Naive thymus-derived CD4-positive, alpha-beta T cell (primary cell): ENCODE measurements at regions of chr9 and their contacts with region 1.

Region 1: GRCh38 chr9:114894801-114895433 is 35.5 kb downstream of the TNFSF8 start:
- DNase-seq: no peak
- ATAC-seq: peak; percentile 27
- H3K4me3 ChIP-seq: no peak overlapping the region
- H3K4me3 Mint-ChIP-seq: peak overlapping the region in 7 of 10 donors; percentile 11 to 73 (median 34)
- H3K27ac ChIP-seq: no peak overlapping the region
- H3K27ac Mint-ChIP-seq: peak overlapping the region in 7 of 9 donors; percentile 24 to 87 (median 48)
- H3K4me1 ChIP-seq: peaks cover 56 to 73% of the 10 kb centered on the region in 2 donors
- H3K4me1 Mint-ChIP-seq: peaks cover 17 to 54% (median 32%) of the 10 kb centered on the region in 7 donors
- H3K27me3 ChIP-seq: no peaks in the 10 kb centered on the region
- H3K27me3 Mint-ChIP-seq: no peaks in the 10 kb centered on the region

Region 2: DNA sequence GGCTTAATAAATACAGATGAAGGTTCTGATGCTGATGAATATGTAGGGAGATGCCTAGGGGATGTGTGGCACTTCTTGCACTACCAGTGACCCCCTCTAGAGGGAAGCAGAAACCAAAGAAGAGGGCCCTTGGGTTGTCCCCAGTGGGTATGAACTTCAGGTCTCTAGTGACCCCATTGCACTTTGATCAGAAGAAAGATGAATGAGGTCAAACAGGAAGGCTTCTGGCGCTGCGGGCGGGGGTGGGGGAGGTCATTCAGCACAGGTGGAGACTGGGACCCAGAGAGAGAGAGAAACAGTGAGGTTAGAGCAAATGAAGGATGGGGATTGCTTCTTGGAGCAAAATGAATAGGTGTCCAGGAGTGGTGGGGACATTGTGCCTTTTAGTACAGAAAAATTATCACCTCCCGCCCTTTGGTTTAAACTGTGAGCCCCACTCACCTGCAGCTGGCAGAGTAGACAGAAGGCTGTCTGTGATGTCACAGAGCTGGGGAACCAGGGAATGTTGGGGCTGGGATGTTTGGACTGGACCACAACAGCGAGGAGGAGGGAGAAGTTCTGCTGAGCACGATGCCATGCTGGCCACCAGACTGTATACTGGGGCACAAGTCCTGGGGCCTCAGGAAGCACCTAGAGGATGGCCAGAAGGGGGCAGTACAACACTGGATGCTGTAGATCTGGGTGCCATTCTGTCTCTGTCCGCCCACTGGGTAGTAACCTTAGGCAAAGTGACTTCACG is 213.2 kb before region 1 on chr9 and contains the start of gene TEX48:
- CTCF ChIA-PET with region 1: no interaction called
- POLR2A ChIA-PET with region 1: no interaction called
- intact Hi-C with region 1: loop called in 1 of 2 experiments (anchors 2 kb)
- DNase-seq: peak; percentile 29 to 74 (median 62)
- ATAC-seq: peak; percentile 95
- H3K4me3 ChIP-seq: no peak within 1 kb of the TSS
- H3K4me3 Mint-ChIP-seq: peak within 1 kb of the TSS in 1 of 10 donors; percentile 56
- H3K27ac ChIP-seq: no peak within 1 kb of the TSS
- H3K27ac Mint-ChIP-seq: peak within 1 kb of the TSS in 1 of 9 donors; percentile 95
- H3K4me1 ChIP-seq: peaks cover 5 to 11% of the 10 kb centered on the region in 2 donors
- H3K4me1 Mint-ChIP-seq: peaks cover 0 to 58% (median 7%) of the 10 kb centered on the region in 7 donors
- H3K27me3 ChIP-seq: peaks cover 0 to 4% of the 10 kb centered on the region in 2 donors
- H3K27me3 Mint-ChIP-seq: peaks cover 0 to 20% (median 14%) of the 10 kb centered on the region in 5 donors
- total RNA-seq, gene TEX48: 0.85 TPM in 1 of 5 experiments, not detected in the others

Region 3: GRCh38 chr9:114718801-114719221 is 176.1 kb before region 1 on chr9:
- CTCF ChIA-PET with region 1: no interaction called
- POLR2A ChIA-PET with region 1: no interaction called
- intact Hi-C with region 1: loop called in 1 of 2 experiments (anchors 1 kb)
- DNase-seq: peak in 5 of 9 donors; percentile 8 to 91 (median 18)
- ATAC-seq: peak; percentile 76
- H3K4me3 ChIP-seq: no peak overlapping the region
- H3K4me3 Mint-ChIP-seq: peak overlapping the region in 9 of 10 donors; percentile 0 to 75 (median 19)
- H3K27ac ChIP-seq: no peak overlapping the region
- H3K27ac Mint-ChIP-seq: peak overlapping the region in 6 of 9 donors; percentile 12 to 97 (median 64)
- H3K4me1 ChIP-seq: peaks cover 14 to 34% of the 10 kb centered on the region in 2 donors
- H3K4me1 Mint-ChIP-seq: peaks cover 10 to 88% (median 20%) of the 10 kb centered on the region in 7 donors
- H3K27me3 ChIP-seq: no peaks in the 10 kb centered on the region
- H3K27me3 Mint-ChIP-seq: no peaks in the 10 kb centered on the region

Region 4: DNA sequence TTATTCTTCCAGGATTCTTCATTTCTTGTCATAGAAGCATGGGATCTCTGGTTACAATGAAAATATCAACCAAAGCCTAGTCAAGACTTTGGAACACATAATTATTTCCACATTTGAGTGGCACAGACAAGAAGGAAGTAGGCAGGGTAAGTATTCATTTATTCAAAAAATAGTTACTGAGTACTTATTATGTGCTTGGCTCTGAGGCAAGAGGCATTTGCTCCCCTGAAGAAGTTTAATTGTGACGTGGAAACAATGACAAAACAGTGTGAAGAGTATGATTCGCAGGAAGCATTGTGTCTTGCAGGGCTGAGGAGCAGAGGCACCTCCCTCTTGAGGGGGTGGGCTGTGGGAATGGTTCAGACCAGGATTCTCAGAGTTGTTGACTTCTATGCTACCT is 44.0 kb before region 1 on chr9:
- CTCF ChIA-PET with region 1: no interaction called
- POLR2A ChIA-PET with region 1: interaction called, 3 read pairs
- intact Hi-C with region 1: loop called in 1 of 2 experiments (anchors 2 kb)
- DNase-seq: no peak
- ATAC-seq: no peak
- H3K4me3 ChIP-seq: no peak overlapping the region
- H3K4me3 Mint-ChIP-seq: no peak overlapping the region
- H3K27ac ChIP-seq: no peak overlapping the region
- H3K27ac Mint-ChIP-seq: peak overlapping the region in 2 of 9 donors; percentile 0 to 33
- H3K4me1 ChIP-seq: no peaks in the 10 kb centered on the region
- H3K4me1 Mint-ChIP-seq: peaks cover 8 to 13% (median 10%) of the 10 kb centered on the region in 7 donors
- H3K27me3 ChIP-seq: no peaks in the 10 kb centered on the region
- H3K27me3 Mint-ChIP-seq: peaks cover 0 to 5% (median 0%) of the 10 kb centered on the region in 5 donors

Region 5: DNA sequence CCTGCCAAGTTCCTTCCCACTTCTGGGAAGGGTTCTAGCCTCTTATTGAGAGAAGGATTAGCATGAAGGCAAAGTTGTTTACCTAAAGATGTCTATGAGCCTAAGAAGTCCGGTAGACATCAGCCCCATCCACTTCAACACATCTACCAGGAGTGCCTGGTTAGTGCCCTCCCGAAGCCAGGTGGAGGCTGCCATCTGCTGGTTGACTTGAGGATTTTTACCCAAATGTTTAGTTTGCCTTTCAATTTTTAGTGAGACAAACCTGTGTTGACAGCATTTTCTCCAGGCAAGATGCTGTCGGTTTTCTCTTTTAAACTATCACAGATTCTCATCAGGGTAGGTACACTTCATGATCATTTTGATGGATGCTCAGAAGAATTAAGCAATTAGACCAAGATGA is 119.1 kb after region 1 on chr9:
- CTCF ChIA-PET with region 1: no interaction called
- POLR2A ChIA-PET with region 1: no interaction called
- intact Hi-C with region 1: loop called in 1 of 2 experiments (anchors 2 kb)
- DNase-seq: peak; percentile 57 to 84 (median 79)
- ATAC-seq: peak; percentile 88
- H3K4me3 ChIP-seq: no peak overlapping the region
- H3K4me3 Mint-ChIP-seq: peak overlapping the region in 1 of 10 donors; percentile 24
- H3K27ac ChIP-seq: no peak overlapping the region
- H3K27ac Mint-ChIP-seq: peak overlapping the region in 2 of 9 donors; percentile 12 to 79
- H3K4me1 ChIP-seq: peaks cover 0 to 4% of the 10 kb centered on the region in 2 donors
- H3K4me1 Mint-ChIP-seq: peaks cover 5 to 59% (median 12%) of the 10 kb centered on the region in 7 donors
- H3K27me3 ChIP-seq: no peaks in the 10 kb centered on the region
- H3K27me3 Mint-ChIP-seq: peaks cover 4 to 14% (median 7%) of the 10 kb centered on the region in 5 donors